Motor neuron (in vitro differentiated cells): ENCODE measurements at regions of chr19 and their contacts with region 1.

Region 1: DNA sequence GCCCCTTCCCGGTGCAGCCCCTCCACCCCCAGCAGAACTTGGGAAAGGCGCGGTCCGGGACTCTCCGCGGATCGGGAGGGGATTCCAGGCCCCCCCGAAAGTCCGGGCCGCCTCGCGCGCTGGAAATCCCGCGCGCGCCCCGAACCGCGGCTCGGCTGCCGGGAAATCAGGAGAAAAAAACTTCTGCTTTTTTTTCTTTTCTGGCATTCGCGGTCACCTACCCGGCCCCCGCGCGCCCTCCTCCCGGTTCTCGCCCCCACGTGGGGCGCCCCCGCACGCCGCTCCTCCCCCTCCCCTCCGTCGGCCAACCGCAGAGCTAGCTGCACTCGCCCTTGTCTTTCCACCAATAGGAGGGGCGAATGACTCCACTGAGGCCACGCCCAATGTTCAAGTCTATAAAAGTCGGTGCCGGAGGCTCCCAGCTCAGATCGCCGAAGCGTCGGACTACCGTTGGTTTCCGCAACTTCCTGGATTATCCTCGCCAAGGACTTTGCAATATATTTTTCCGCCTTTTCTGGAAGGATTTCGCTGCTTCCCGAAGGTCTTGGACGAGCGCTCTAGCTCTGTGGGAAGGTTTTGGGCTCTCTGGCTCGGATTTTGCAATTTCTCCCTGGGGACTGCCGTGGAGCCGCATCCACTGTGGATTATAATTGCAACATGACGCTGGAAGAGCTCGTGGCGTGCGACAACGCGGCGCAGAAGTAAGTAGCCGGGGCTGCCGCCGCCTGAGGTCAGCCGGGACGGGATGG is at the start of gene GADD45B:
- ATAC-seq: peak; percentile 4 to 61 (median 48)
- H3K4me3 ChIP-seq: peak within 1 kb of the TSS; percentile 27 to 95 (median 55)
- H3K27ac ChIP-seq: peak within 1 kb of the TSS in 1 of 2 donors; percentile 18
- H3K4me1 ChIP-seq: peaks cover 8 to 23% of the 10 kb centered on the region in 2 donors
- total RNA-seq, gene GADD45B: 9.4 to 80.4 (median 20.8) TPM

Region 2: DNA sequence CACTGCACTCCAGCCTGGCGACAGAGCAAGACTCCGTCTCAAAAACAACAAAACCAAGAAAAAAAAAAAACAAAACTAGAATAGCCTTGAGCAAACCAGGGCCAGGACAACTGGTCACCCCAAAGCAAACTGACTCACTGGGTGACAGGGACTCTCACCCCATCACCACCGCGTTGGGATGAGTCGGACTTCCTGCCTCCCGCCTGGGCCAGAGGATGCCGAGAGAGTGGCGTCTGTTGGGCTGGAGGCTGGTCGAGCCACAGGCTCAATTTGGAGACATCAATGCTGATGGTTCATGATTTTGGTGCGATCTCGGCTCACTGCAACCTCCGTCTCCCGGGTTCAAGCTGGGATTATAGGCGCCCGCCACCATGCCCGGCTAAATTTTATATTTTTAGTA is 104.2 kb before region 1 on chr19:
- in situ Hi-C with region 1: no loop called
- ATAC-seq: no peak
- H3K4me3 ChIP-seq: no peak overlapping the region
- H3K27ac ChIP-seq: no peak overlapping the region
- H3K4me1 ChIP-seq: peaks cover 7 to 12% of the 10 kb centered on the region in 2 donors

Region 3: GRCh38 chr19:2552859-2553258 is 77.0 kb after region 1 on chr19:
- in situ Hi-C with region 1: no loop called
- ATAC-seq: no peak
- H3K4me3 ChIP-seq: no peak overlapping the region
- H3K27ac ChIP-seq: no peak overlapping the region
- H3K4me1 ChIP-seq: peaks cover 6 to 11% of the 10 kb centered on the region in 2 donors

Region 4: GRCh38 chr19:2578901-2579677 is 103.2 kb after region 1 on chr19:
- in situ Hi-C with region 1: loop called in 2 of 9 experiments (anchors 25 kb)
- ATAC-seq: peak; percentile 81 to 96 (median 95)
- H3K4me3 ChIP-seq: peak overlapping the region; percentile 17 to 38 (median 34)
- H3K27ac ChIP-seq: no peak overlapping the region
- H3K4me1 ChIP-seq: peaks cover 0 to 11% of the 10 kb centered on the region in 2 donors

Region 5: GRCh38 chr19:2602391-2603181 is 126.7 kb after region 1 on chr19:
- in situ Hi-C with region 1: loop called in 4 of 9 experiments (anchors 10 to 25 kb)
- ATAC-seq: peak; percentile 5 to 84 (median 28)
- H3K4me3 ChIP-seq: no peak overlapping the region
- H3K27ac ChIP-seq: no peak overlapping the region
- H3K4me1 ChIP-seq: peaks cover 3 to 7% of the 10 kb centered on the region in 2 donors

Region 6: DNA sequence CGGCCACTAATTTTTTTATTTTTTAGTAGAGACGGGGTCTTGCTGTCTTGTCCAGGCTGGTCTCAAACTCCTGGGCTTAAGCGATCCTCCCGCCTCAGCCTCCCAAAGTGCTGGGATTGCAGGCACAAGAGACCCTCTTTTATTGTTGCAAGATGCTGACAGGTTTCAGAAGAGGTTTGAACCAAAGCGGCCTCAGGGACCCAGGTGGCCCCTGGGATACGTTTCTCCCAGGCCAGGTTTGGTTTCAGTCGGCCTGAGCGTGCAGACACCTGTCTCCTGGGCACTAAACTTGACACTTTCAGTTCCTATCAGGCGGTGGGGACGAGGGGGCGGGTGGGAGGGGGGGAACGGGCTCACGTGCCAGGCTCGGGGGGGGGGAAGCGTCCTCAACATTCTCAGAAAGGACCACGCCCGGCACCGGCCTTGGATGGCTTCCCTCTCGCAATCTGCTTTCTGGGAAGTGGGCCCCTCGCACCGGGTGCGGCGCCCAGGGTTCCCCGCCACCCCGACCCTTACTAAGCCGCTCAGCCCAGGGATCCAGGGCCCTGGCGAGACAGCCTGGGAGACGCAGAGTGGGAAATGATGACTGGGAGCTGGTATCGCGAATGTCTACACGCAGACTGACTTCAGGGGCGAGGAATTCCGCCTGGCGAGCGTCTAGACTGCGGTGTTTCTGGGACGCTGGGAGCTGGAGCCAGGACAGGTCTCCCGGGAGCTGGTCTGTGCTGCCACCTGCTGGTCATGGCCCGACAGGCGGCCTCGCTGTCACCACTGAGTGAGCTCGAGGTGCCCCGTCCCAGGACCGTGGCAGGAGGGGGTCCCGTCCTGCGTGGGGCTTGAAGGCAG is 135.0 kb after region 1 on chr19:
- in situ Hi-C with region 1: loop called in 4 of 9 experiments (anchors 10 to 25 kb)
- ATAC-seq: peak; percentile 88 to 98 (median 96)
- H3K4me3 ChIP-seq: peak overlapping the region; percentile 11 to 33 (median 21)
- H3K27ac ChIP-seq: no peak overlapping the region
- H3K4me1 ChIP-seq: peaks cover 0 to 2% of the 10 kb centered on the region in 2 donors